ENCODE measurements at regions of chr16 and their contacts with region 1.

Region 1: GRCh38 chr16:4019371-4019791 is 96.9 kb downstream of the ADCY9 start:
- DNase-seq: no peak
- ATAC-seq: peak; percentile 45 to 60 (median 48)
- H3K4me3 ChIP-seq: peak overlapping the region; percentile 14 to 49 (median 43)
- H3K27ac ChIP-seq: peak overlapping the region; percentile 52 to 84 (median 61)
- H3K4me1 ChIP-seq: peaks cover 0 to 29% (median 13%) of the 10 kb centered on the region in 4 donors
- H3K27me3 ChIP-seq: no peaks in the 10 kb centered on the region
- CTCF ChIP-seq: no peak
- POLR2A ChIP-seq: no peak

Region 2: GRCh38 chr16:3938848-3939624 is 80.3 kb before region 1 on chr16:
- intact Hi-C with region 1: no loop called
- DNase-seq: peak in 2 of 3 donors; percentile 60 to 68
- ATAC-seq: peak; percentile 83 to 87 (median 84)
- H3K4me3 ChIP-seq: peak overlapping the region; percentile 35 to 52 (median 47)
- H3K27ac ChIP-seq: no peak overlapping the region
- H3K4me1 ChIP-seq: peaks cover 0 to 9% (median 0%) of the 10 kb centered on the region in 4 donors
- H3K27me3 ChIP-seq: no peaks in the 10 kb centered on the region
- CTCF ChIP-seq: peak; percentile 72 to 97 (median 94)
- POLR2A ChIP-seq: no peak

Region 3: DNA sequence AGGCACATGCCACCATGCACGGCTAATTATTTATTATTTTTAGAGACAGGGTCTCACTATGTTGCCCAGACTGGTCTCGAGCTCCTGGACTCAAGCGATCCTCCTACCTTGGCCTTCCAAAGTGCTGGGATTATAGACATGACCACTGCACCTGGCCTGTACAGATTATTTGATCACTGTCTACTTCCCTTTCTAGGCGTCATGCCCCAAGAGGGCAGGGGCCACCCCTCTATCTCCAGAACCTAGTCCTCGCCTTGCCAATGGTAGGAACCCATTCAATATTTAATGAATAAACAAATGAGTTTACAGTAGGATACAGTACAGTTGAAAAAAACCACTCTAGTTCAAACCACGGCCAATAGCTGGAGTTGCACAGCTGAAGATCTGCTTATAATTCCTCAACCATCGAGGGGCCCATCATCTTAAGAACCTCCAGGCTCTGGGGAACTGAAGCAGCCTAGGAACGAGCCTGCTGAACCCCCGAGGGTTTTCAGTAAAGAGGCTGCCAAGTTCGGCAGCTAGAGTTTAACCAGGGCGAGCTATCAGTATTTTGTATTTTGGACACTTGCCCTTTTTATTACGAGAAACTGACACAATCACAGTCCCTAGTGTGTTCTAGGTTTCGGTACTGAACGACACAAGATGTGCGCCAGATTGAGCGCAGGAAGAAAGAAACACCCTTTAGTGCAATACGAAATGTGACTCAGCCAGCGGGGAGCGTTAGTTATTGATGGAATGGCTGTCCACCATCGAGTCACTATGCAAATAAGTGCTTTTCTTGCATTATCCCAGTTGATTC is 82.2 kb after region 1 on chr16:
- intact Hi-C with region 1: loop called in 1 of 2 experiments (anchors 10 kb)
- DNase-seq: no peak
- ATAC-seq: peak; percentile 77 to 84 (median 77)
- H3K4me3 ChIP-seq: peak overlapping the region in 1 of 3 donors; percentile 13
- H3K27ac ChIP-seq: peak overlapping the region; percentile 30 to 43 (median 39)
- H3K4me1 ChIP-seq: peaks cover 0 to 15% (median 0%) of the 10 kb centered on the region in 4 donors
- H3K27me3 ChIP-seq: no peaks in the 10 kb centered on the region
- CTCF ChIP-seq: no peak
- POLR2A ChIP-seq: no peak